HCT116 (cell line): ENCODE measurements at regions of chr6 and their contacts with region 1.

Region 1: GRCh38 chr6:28136585-28137504 is 4.8 kb upstream of the ZKSCAN8 start:
- DNase-seq: peak; percentile 78
- ATAC-seq: peak; percentile 66
- H3K4me3 ChIP-seq: peak overlapping the region; percentile 90 to 93
- H3K27ac ChIP-seq: peak overlapping the region; percentile 50
- H3K4me1 ChIP-seq: peaks cover 10 to 19% of the 10 kb centered on the region in 2 experiments
- H3K27me3 ChIP-seq: no peaks in the 10 kb centered on the region
- CTCF ChIP-seq: no peak
- POLR2A ChIP-seq: peak; percentile 44
- RAD21 ChIP-seq: peak; percentile 25; the same call in 1 of the 2 replicates

Region 2: GRCh38 chr6:28124102-28124970 is 12.5 kb before region 1 on chr6 and contains the start of gene ZSCAN16:
- CTCF ChIA-PET with region 1: no interaction called
- POLR2A ChIA-PET with region 1: interaction called, 21 read pairs
- RAD21 ChIA-PET with region 1: no interaction called
- intact Hi-C with region 1: loop called (anchors 2 kb)
- DNase-seq: peak; percentile 82
- ATAC-seq: peak; percentile 99
- H3K4me3 ChIP-seq: peak within 1 kb of the TSS; percentile 73 to 79
- H3K27ac ChIP-seq: peak within 1 kb of the TSS; percentile 35
- H3K4me1 ChIP-seq: peaks cover 7 to 12% of the 10 kb centered on the region in 2 experiments; a peak in 2 of 4 replicates
- H3K27me3 ChIP-seq: no peaks in the 10 kb centered on the region
- CTCF ChIP-seq: no peak
- POLR2A ChIP-seq: peak; percentile 33
- RAD21 ChIP-seq: no peak; the same call in 1 of the 2 replicates
- total RNA-seq, gene ZSCAN16: 5.0 TPM

Region 3: GRCh38 chr6:28212510-28213212 is 75.8 kb after region 1 on chr6:
- CTCF ChIA-PET with region 1: no interaction called
- POLR2A ChIA-PET with region 1: no interaction called
- RAD21 ChIA-PET with region 1: no interaction called
- intact Hi-C with region 1: loop called (anchors 2 kb)
- DNase-seq: peak; percentile 80
- ATAC-seq: peak; percentile 88
- H3K4me3 ChIP-seq: peak overlapping the region; percentile 47 to 53
- H3K27ac ChIP-seq: peak overlapping the region; percentile 38
- H3K4me1 ChIP-seq: peaks cover 5 to 15% of the 10 kb centered on the region in 2 experiments; a peak in 3 of 4 replicates
- H3K27me3 ChIP-seq: no peaks in the 10 kb centered on the region
- CTCF ChIP-seq: peak in 2 of 3 experiments; percentile 19 to 38; a peak in 2 of 6 replicates
- POLR2A ChIP-seq: no peak
- RAD21 ChIP-seq: peak; percentile 62

Region 4: DNA sequence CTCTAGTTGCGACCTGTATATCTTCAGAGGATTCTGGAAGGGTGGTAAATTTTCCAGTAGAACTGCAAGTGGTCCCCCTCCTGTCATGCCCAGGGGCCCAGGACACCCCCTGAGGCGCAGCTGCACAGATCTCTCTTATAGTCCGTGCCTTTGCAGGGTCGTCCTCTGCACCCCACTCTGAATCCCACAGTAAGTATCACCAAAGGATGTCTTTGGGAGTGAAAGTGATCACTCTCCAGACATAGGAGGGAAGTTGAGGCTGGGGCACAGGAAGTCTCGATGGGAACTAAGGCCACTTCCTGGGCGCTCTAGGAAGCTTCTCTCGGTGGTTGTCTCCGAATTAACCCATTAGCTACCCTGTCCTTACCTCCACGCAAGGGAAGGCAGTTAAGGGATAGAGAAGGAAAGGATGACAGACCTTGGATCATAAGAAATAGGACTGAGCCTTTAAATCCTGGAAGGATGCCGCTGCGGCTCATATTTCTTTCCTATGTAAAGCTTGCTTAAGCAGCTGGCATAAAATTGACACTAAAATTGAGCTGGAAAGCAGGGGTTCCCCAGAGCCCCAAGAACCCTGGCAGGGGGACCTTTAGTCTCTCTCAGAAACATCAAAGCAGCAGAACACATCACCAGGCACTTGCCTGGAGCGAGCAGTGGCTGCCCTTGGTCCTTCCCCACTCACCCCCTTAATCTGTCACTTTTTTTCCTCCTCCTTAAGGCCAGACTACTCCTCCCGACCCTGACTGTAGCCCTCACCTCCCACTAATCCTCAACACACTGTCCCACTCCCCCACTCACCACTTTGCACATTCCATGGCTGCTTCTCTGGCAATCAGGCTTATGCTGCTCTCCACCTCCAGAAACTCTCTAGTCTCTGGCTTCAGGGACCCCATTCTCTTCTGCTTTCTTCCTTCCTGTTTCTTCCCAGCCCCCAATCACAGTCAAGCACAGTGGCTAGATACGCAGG is 115.4 kb after region 1 on chr6 and contains the start of gene ZKSCAN4:
- CTCF ChIA-PET with region 1: no interaction called
- POLR2A ChIA-PET with region 1: interaction called, 12 read pairs
- RAD21 ChIA-PET with region 1: no interaction called
- intact Hi-C with region 1: loop called (anchors 1 kb)
- DNase-seq: peak; percentile 90
- ATAC-seq: peak; percentile 95
- H3K4me3 ChIP-seq: peak within 1 kb of the TSS; percentile 97 to 98
- H3K27ac ChIP-seq: peak within 1 kb of the TSS; percentile 44
- H3K4me1 ChIP-seq: peaks cover 7 to 15% of the 10 kb centered on the region in 2 experiments; a peak in 3 of 4 replicates
- H3K27me3 ChIP-seq: no peaks in the 10 kb centered on the region
- CTCF ChIP-seq: no peak
- POLR2A ChIP-seq: peak; percentile 17
- RAD21 ChIP-seq: peak; percentile 17; the same call in 1 of the 2 replicates
- total RNA-seq, gene ZKSCAN4: 4.8 TPM

Region 5: GRCh38 chr6:28355743-28356665 is 219.2 kb after region 1 on chr6:
- CTCF ChIA-PET with region 1: interaction called, 8 read pairs
- POLR2A ChIA-PET with region 1: interaction called, 5 read pairs
- RAD21 ChIA-PET with region 1: interaction called, 3 read pairs
- intact Hi-C with region 1: loop called (anchors 1 kb)
- DNase-seq: peak; percentile 72
- ATAC-seq: peak; percentile 72
- H3K4me3 ChIP-seq: peak overlapping the region; percentile 46 to 63
- H3K27ac ChIP-seq: peak overlapping the region; percentile 85
- H3K4me1 ChIP-seq: peaks cover 39 to 56% of the 10 kb centered on the region in 2 experiments
- H3K27me3 ChIP-seq: no peaks in the 10 kb centered on the region
- CTCF ChIP-seq: peak; percentile 60 to 69 (median 62)
- POLR2A ChIP-seq: no peak
- RAD21 ChIP-seq: peak; percentile 84